ENCODE measurements at regions of chr19 and their contacts with region 1.

Region 1: GRCh38 chr19:10644260-10645007 is 9.7 kb upstream of the ILF3 start:
- DNase-seq: peak; percentile 68 to 95
- H3K4me3 ChIP-seq: no peak overlapping the region; a peak in 1 of 8 replicates
- H3K27ac ChIP-seq: 0 out of 2 replicates have a peak overlapping the region, but pooled peaks have one; percentile 26
- H3K4me1 ChIP-seq: peaks cover 6 to 17% (median 13%) of the 10 kb centered on the region in 4 experiments
- H3K27me3 ChIP-seq: no peaks in the 10 kb centered on the region
- CTCF ChIP-seq: peak; percentile 89 to 96 (median 94)
- EP300 ChIP-seq: no peak
- POLR2A ChIP-seq: no peak; a peak in 1 of 3 replicates
- RAD21 ChIP-seq: peak; percentile 88 to 89

Region 2: DNA sequence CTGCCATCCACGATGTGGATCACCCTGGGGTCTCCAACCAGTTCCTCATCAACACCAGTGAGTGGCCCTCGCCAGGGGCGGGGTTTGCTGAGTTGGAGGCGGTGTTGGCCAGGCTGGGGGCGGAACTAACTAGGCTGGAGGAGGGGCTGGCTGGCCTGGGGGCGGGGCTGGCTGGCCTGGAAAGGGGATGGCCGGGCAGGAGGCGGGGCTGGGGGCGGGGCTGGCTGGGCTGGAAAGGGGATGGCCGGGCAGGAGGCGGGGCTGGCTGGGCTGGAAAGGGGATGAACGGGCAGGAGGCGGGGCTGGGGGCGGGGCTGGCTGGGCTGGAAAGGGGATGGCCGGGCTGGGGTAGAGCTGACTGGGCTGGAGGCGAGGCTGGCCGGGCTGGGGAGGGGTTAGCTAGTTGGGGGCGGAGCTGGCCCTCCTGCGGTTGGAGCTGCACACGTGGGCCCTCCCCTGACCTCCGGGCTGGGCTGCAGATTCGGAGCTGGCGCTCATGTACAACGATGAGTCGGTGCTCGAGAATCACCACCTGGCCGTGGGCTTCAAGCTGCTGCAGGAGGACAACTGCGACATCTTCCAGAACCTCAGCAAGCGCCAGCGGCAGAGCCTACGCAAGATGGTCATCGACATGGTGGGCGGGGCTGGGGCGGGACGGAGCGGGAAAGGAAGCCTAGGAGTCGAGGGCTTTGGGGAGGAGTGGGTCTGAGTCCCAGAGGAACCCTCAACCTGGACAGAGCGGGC is 183.2 kb before region 1 on chr19:
- CTCF ChIA-PET with region 1: no interaction called
- POLR2A ChIA-PET with region 1: no interaction called
- DNase-seq: peak; percentile 90 to 100
- H3K4me3 ChIP-seq: peak overlapping the region; percentile 62 to 78 (median 72)
- H3K27ac ChIP-seq: peak overlapping the region; percentile 66; the same call in 1 of the 2 replicates
- H3K4me1 ChIP-seq: peaks cover 0 to 7% (median 2%) of the 10 kb centered on the region in 4 experiments; a peak in 6 of 7 replicates
- H3K27me3 ChIP-seq: peaks cover 0 to 5% (median 2%) of the 10 kb centered on the region in 4 experiments; a peak in 4 of 7 replicates
- CTCF ChIP-seq: no peak
- EP300 ChIP-seq: no peak
- POLR2A ChIP-seq: peak in 1 of 2 experiments; percentile 53; a peak in 1 of 3 replicates
- RAD21 ChIP-seq: no peak

Region 3: GRCh38 chr19:10523135-10523636 is 121.2 kb before region 1 on chr19:
- CTCF ChIA-PET with region 1: no interaction called
- POLR2A ChIA-PET with region 1: no interaction called
- DNase-seq: no peak
- H3K4me3 ChIP-seq: no peak overlapping the region
- H3K27ac ChIP-seq: no peak overlapping the region
- H3K4me1 ChIP-seq: peaks cover 0 to 8% (median 4%) of the 10 kb centered on the region in 4 experiments; a peak in 3 of 7 replicates
- H3K27me3 ChIP-seq: peaks cover 7 to 14% (median 13%) of the 10 kb centered on the region in 4 experiments; a peak in 6 of 7 replicates
- CTCF ChIP-seq: no peak
- EP300 ChIP-seq: no peak
- POLR2A ChIP-seq: no peak
- RAD21 ChIP-seq: no peak

Region 4: DNA sequence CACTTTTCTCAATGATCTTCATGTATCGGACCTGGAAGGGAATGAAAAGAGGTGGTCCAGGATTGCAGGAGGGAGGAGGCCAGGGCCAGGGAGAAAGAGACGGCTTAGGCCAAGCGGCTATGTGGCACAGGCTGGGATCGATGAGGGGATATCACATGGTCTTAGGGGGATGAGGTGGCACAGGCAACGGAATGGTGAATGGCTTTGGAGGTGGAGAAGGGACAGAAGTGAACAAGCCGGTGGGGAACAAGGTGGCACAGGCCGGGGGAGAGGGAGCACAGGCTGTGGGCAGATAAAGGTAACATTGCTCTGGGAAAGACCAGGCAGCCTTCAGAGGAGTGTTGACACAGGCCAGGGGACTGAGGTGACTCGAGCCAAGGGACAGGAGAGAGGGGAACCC is 70.0 kb before region 1 on chr19:
- CTCF ChIA-PET with region 1: interaction called, 267 read pairs
- POLR2A ChIA-PET with region 1: interaction called, 27 read pairs
- DNase-seq: no peak
- H3K4me3 ChIP-seq: no peak overlapping the region
- H3K27ac ChIP-seq: no peak overlapping the region
- H3K4me1 ChIP-seq: no peaks in the 10 kb centered on the region
- H3K27me3 ChIP-seq: no peaks in the 10 kb centered on the region
- CTCF ChIP-seq: no peak
- EP300 ChIP-seq: no peak
- POLR2A ChIP-seq: no peak; a peak in 1 of 3 replicates
- RAD21 ChIP-seq: no peak

Region 5: GRCh38 chr19:10602330-10603083 is 41.9 kb before region 1 on chr19:
- CTCF ChIA-PET with region 1: interaction called, 14 read pairs
- POLR2A ChIA-PET with region 1: interaction called, 4 read pairs
- DNase-seq: peak in 1 of 2 experiments; percentile 89
- H3K4me3 ChIP-seq: peak overlapping the region; percentile 79 to 98 (median 88)
- H3K27ac ChIP-seq: 0 out of 2 replicates have a peak overlapping the region, but pooled peaks have one; percentile 67
- H3K4me1 ChIP-seq: peaks cover 0 to 11% (median 7%) of the 10 kb centered on the region in 4 experiments; a peak in 6 of 7 replicates
- H3K27me3 ChIP-seq: no peaks in the 10 kb centered on the region
- CTCF ChIP-seq: no peak
- EP300 ChIP-seq: no peak
- POLR2A ChIP-seq: peak in 1 of 2 experiments; percentile 59; a peak in 2 of 3 replicates
- RAD21 ChIP-seq: no peak

Region 6: DNA sequence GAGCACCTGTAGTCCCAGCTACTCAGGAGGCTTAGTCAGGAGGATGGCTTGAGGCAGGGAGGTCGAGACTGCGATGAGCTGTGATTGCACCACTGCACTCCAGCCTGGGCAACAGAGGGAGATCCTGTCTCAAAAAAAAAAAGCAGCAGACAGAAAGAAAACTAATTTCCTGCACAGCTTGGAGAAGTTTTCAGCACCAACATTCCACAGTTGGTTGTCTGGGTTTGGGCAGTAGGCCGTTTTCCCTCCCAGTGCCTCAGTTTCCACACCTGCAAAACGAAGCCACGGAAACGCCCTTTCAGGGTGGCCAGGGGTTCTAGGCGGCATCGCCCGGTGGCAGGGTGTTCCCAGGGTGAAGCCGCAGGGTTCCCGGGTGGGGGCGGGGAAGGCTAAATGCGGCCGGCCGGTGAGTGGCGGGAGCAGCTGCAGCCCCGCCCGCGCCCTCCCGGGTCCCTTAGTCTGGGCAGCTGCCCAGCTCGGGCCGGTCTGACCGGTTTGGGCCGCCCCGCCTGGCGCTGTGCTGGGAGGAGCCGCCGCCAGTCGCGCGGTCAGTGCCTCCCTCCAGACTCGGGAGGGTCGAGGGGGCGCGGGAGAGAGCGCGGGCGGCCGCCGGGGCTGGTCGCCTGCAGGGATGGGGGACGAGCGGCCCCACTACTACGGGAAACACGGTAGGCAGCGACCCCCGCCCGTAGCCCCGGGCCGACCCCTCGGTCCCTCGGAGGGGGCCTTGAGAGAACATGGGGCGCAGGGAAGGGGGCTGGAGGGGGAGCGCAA is 19.2 kb before region 1 on chr19 and contains the start of gene SLC44A2:
- CTCF ChIA-PET with region 1: interaction called, 18 read pairs
- POLR2A ChIA-PET with region 1: interaction called, 23 read pairs
- DNase-seq: peak in 1 of 2 experiments; percentile 90
- H3K4me3 ChIP-seq: peak within 1 kb of the TSS; percentile 84 to 92 (median 87)
- H3K27ac ChIP-seq: peak within 1 kb of the TSS; percentile 83
- H3K4me1 ChIP-seq: peaks cover 4 to 9% (median 8%) of the 10 kb centered on the region in 4 experiments
- H3K27me3 ChIP-seq: no peaks in the 10 kb centered on the region
- CTCF ChIP-seq: peak in 1 of 3 experiments; percentile 8; a peak in 1 of 4 replicates
- EP300 ChIP-seq: peak in 1 of 2 experiments; percentile 84; a peak in 1 of 3 replicates
- POLR2A ChIP-seq: peak; percentile 62 to 98
- RAD21 ChIP-seq: peak in 1 of 2 experiments; percentile 6; a peak in 1 of 4 replicates
- total RNA-seq, gene SLC44A2: 118 and 120 TPM in 2 replicates

Region 7: GRCh38 chr19:10695401-10696398 is 51.3 kb after region 1 on chr19:
- CTCF ChIA-PET with region 1: interaction called, 12 read pairs
- POLR2A ChIA-PET with region 1: interaction called, 1,874 read pairs
- DNase-seq: peak; percentile 94 to 96
- H3K4me3 ChIP-seq: peak overlapping the region in 3 of 4 experiments; percentile 19 to 49 (median 34); a peak in 6 of 8 replicates
- H3K27ac ChIP-seq: no peak overlapping the region
- H3K4me1 ChIP-seq: peaks cover 0 to 6% (median 1%) of the 10 kb centered on the region in 4 experiments; a peak in 4 of 7 replicates
- H3K27me3 ChIP-seq: no peaks in the 10 kb centered on the region
- CTCF ChIP-seq: 0 out of 4 replicates have a peak, but pooled peaks of 1 of the 3 experiments have one; percentile 4
- EP300 ChIP-seq: peak in 1 of 2 experiments; percentile 18; a peak in 1 of 3 replicates
- POLR2A ChIP-seq: peak in 1 of 2 experiments; percentile 35; a peak in 1 of 3 replicates
- RAD21 ChIP-seq: no peak

Region 8: DNA sequence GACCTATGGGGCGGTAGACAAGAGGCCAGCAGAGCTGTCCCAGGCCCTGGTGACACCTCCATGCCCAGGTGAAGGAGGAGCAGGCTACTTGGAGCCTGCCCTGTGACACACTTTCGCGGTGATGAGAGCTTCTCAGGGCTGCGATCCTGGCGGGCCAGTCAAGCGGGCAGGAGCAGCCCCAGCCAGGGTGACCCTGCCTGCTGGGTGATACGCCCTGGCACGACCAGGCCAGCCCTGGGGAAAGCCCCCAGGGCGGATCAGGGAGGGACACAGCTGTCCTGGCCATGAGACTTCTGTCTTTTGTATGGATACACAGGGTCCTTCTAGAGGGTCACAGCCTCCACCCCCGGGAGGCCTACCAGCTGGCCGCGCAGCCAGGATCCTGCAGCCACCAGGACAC is 86.5 kb after region 1 on chr19:
- CTCF ChIA-PET with region 1: no interaction called
- POLR2A ChIA-PET with region 1: no interaction called
- DNase-seq: no peak
- H3K4me3 ChIP-seq: no peak overlapping the region
- H3K27ac ChIP-seq: no peak overlapping the region
- H3K4me1 ChIP-seq: no peaks in the 10 kb centered on the region
- H3K27me3 ChIP-seq: no peaks in the 10 kb centered on the region
- CTCF ChIP-seq: no peak
- EP300 ChIP-seq: no peak
- POLR2A ChIP-seq: no peak
- RAD21 ChIP-seq: no peak

Region 9: DNA sequence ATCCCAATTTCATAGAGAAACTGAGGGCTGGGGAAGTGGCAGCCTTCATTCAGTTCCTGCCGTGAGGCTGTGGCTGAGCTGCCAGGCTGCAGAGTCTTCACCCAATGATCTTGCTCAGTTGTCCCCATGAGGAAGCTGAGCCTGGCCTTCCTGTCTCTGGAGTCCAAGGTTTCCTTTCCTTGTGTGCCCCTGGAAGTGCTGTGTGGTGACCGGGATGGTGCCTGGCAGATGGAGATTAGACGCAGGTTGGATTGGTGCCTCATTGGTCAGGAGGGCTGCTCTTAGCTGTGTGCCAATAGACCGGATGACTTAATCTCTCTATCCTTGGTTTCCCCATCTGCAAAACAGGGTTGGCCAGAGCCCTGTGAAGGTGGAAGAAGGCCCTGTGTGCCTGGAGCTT is 98.0 kb after region 1 on chr19:
- CTCF ChIA-PET with region 1: no interaction called
- POLR2A ChIA-PET with region 1: no interaction called
- DNase-seq: no peak
- H3K4me3 ChIP-seq: no peak overlapping the region
- H3K27ac ChIP-seq: no peak overlapping the region
- H3K4me1 ChIP-seq: peaks cover 0 to 5% (median 1%) of the 10 kb centered on the region in 4 experiments; a peak in 2 of 7 replicates
- H3K27me3 ChIP-seq: no peaks in the 10 kb centered on the region
- CTCF ChIP-seq: no peak
- EP300 ChIP-seq: no peak
- POLR2A ChIP-seq: no peak
- RAD21 ChIP-seq: no peak

Measured in H1 (cell line).